Sciatic nerve (tissue), 2 donors: ENCODE measurements at regions of chr1 and their contacts with region 1.

Region 1: DNA sequence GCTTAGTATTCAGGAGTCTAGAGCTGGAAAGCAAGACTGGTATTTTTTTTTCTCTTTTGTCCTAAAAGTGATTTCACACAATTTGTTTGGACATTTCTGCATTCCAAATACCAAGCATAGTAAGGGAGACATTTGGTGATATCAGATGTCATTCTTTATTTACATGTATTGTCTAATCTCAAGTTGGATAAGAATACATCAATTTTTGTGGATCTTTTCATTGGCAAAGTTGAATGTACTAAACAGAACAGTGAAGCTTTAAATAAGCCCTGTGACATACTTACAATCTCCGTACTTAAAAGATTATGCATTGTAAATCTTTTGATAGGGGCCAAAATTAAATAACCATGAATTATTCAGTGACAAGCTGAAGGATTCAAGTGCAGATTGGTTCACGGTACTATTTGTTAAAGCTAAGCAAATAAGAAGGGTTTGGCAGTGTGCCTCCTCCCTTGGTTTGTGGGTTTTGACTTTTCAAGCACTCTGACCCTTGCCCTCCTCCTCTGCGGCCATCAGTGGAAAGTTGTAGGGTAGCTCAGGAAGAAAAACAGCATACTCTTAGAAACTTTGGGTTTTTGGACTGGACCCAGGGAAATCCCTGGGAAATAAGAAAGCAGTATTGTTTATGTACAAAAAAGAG is 663.7 kb downstream of the ADGRL2 start:
- DNase-seq: peak; percentile 82
- ATAC-seq: peak; percentile 94

Region 2: DNA sequence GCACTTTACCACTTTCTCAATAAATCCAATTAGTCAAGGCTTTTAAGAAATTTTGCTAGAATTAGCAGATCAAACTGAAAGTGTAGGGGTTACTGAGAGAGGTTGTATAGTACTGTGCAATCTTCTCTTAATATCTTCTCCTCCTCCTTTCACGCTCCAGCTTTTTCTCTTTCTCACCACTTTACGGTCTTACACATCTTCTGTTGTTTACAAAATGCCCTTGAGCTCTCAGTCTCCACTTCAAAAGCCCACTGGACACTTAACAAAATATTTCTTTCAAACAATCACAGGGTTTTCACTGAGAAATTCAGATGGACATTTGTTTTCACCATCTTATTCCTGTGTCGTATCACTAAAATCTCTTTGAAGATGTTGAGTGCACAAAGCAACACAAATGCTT is 14.4 kb after region 1 on chr1:
- intact Hi-C with region 1: loop called (anchors 2 kb)
- DNase-seq: no peak
- ATAC-seq: no peak

Region 3: GRCh38 chr1:82755671-82756070 is 291.2 kb after region 1 on chr1:
- intact Hi-C with region 1: no loop called
- DNase-seq: no peak
- ATAC-seq: no peak